WTC11 (cell line): ENCODE measurements at regions of chr11 and their contacts with region 1.

Region 1: GRCh38 chr11:73779084-73779902 is 8.4 kb upstream of the MRPL48 start:
- DNase-seq: peak; percentile 99
- ATAC-seq: peak; percentile 98
- H3K4me3 Mint-ChIP-seq: peak overlapping the region; percentile 98
- H3K27ac Mint-ChIP-seq: peak overlapping the region; percentile 100
- H3K4me1 Mint-ChIP-seq: peaks cover 13% of the 10 kb centered on the region
- H3K27me3 Mint-ChIP-seq: no peaks in the 10 kb centered on the region; the same call in 1 of the 2 replicates
- CTCF ChIP-seq: no peak

Region 2: GRCh38 chr11:73760679-73761402 is 18.5 kb before region 1 on chr11 and contains the start of gene RAB6A:
- CTCF ChIA-PET with region 1: interaction called, 15 read pairs
- POLR2A ChIA-PET with region 1: interaction called, 40 read pairs
- DNase-seq: peak; percentile 99
- ATAC-seq: peak; percentile 92
- H3K4me3 Mint-ChIP-seq: peak within 1 kb of the TSS; percentile 95
- H3K27ac Mint-ChIP-seq: peak within 1 kb of the TSS; percentile 94
- H3K4me1 Mint-ChIP-seq: peaks cover 28% of the 10 kb centered on the region
- H3K27me3 Mint-ChIP-seq: no peaks in the 10 kb centered on the region
- CTCF ChIP-seq: no peak
- total RNA-seq, gene RAB6A: 103 to 114 TPM (median 107 TPM) in 3 replicates